Endothelial cell of umbilical vein (primary cell): ENCODE measurements at regions of chr16 and their contacts with region 1.

Region 1: DNA sequence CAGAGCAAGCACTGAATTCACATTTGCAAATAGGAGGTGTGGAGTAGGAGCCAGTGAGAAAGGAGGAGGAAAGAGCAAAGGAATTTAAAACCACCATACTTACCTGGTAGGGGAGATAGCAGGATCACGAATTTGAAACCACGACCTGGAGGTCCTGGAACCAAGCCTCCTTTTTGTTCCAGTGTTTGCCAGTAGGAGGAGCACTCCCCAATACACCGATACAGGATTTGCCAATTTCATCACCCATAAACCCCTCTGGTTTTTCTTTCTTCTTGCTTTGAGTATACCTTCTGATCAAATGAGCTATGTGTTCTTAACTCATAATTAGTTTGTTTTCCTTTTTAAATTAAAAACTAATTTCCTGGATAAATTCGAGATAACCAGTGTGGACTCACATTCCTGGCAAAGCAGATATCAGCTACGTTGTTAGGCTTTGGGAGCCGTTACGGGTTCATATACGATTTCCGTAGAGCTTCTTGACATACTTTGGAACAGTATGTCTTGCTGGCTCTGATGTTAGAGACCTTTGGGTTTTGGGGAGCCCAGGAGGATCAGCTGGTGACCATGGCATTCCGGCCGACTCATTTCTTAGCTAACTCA is 22.7 kb downstream of the BCO1 start:
- DNase-seq: peak; percentile 30
- H3K4me3 ChIP-seq: no peak overlapping the region
- H3K27ac ChIP-seq: no peak overlapping the region
- H3K4me1 ChIP-seq: no peaks in the 10 kb centered on the region
- H3K27me3 ChIP-seq: peaks cover 0 to 1% of the 10 kb centered on the region in 2 experiments
- CTCF ChIP-seq: peak; percentile 71 to 72
- POLR2A ChIP-seq: no peak

Region 2: DNA sequence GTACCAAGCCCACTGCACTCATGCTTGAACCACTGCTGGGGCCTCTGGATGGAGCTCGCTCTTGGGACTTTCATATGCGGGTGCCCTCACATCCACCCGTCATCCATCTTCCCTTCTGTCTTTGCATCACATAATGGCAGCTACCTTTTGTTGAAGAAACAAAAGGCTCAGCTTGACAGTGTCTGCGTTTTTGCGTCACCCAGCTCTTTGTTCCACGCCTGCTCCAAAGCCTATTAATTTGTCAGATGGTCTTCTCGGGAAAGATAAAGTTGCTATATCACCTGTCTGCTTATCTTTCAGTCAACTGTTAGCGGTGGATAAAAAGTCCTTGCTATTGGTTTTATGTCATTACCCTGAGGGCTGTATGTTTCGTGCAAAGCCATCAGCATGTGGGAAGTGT is 40.8 kb before region 1 on chr16:
- CTCF ChIA-PET with region 1: no interaction called
- POLR2A ChIA-PET with region 1: no interaction called
- dilution Hi-C with region 1: no loop called
- intact Hi-C with region 1: no loop called
- DNase-seq: no peak
- H3K4me3 ChIP-seq: no peak overlapping the region
- H3K27ac ChIP-seq: no peak overlapping the region
- H3K4me1 ChIP-seq: no peaks in the 10 kb centered on the region
- H3K27me3 ChIP-seq: peaks cover 0 to 3% of the 10 kb centered on the region in 2 experiments
- CTCF ChIP-seq: no peak
- POLR2A ChIP-seq: no peak

Region 3: GRCh38 chr16:81238296-81239011 is 22.7 kb before region 1 on chr16 and contains the start of gene BCO1:
- CTCF ChIA-PET with region 1: interaction called, 13 read pairs
- POLR2A ChIA-PET with region 1: no interaction called
- dilution Hi-C with region 1: no loop called
- intact Hi-C with region 1: no loop called
- DNase-seq: peak; percentile 43
- H3K4me3 ChIP-seq: peak within 1 kb of the TSS in 2 of 3 experiments; percentile 5 to 33
- H3K27ac ChIP-seq: no peak within 1 kb of the TSS
- H3K4me1 ChIP-seq: no peaks in the 10 kb centered on the region
- H3K27me3 ChIP-seq: no peaks in the 10 kb centered on the region
- CTCF ChIP-seq: no peak
- POLR2A ChIP-seq: no peak
- total RNA-seq, gene BCO1: not detected in 2 replicates

Region 4: GRCh38 chr16:81279395-81279794 is 18.2 kb after region 1 on chr16:
- CTCF ChIA-PET with region 1: interaction called, 12 read pairs
- POLR2A ChIA-PET with region 1: interaction called, 4 read pairs
- dilution Hi-C with region 1: no loop called
- intact Hi-C with region 1: no loop called
- DNase-seq: peak; percentile 76
- H3K4me3 ChIP-seq: no peak overlapping the region
- H3K27ac ChIP-seq: peak overlapping the region; percentile 91
- H3K4me1 ChIP-seq: peaks cover 21% of the 10 kb centered on the region
- H3K27me3 ChIP-seq: no peaks in the 10 kb centered on the region
- CTCF ChIP-seq: no peak
- POLR2A ChIP-seq: no peak

Region 5: GRCh38 chr16:81286190-81286589 is 25.0 kb after region 1 on chr16:
- CTCF ChIA-PET with region 1: interaction called, 12 read pairs
- POLR2A ChIA-PET with region 1: no interaction called
- dilution Hi-C with region 1: no loop called
- intact Hi-C with region 1: no loop called
- DNase-seq: no peak
- H3K4me3 ChIP-seq: no peak overlapping the region
- H3K27ac ChIP-seq: no peak overlapping the region
- H3K4me1 ChIP-seq: no peaks in the 10 kb centered on the region
- H3K27me3 ChIP-seq: no peaks in the 10 kb centered on the region
- CTCF ChIP-seq: no peak
- POLR2A ChIP-seq: no peak

Region 6: GRCh38 chr16:81314603-81315270 is 53.6 kb after region 1 on chr16 and contains the start of gene GAN:
- CTCF ChIA-PET with region 1: interaction called, 20 read pairs
- POLR2A ChIA-PET with region 1: no interaction called
- dilution Hi-C with region 1: no loop called
- intact Hi-C with region 1: loop called (anchors 1 kb)
- DNase-seq: peak; percentile 98
- H3K4me3 ChIP-seq: peak within 1 kb of the TSS; percentile 59 to 94 (median 93)
- H3K27ac ChIP-seq: peak within 1 kb of the TSS; percentile 67
- H3K4me1 ChIP-seq: peaks cover 16% of the 10 kb centered on the region
- H3K27me3 ChIP-seq: no peaks in the 10 kb centered on the region
- CTCF ChIP-seq: no peak
- POLR2A ChIP-seq: peak; percentile 76
- total RNA-seq, gene GAN: 11.1 and 12.2 TPM in 2 replicates

Region 7: GRCh38 chr16:81723098-81723723 is 462.1 kb after region 1 on chr16:
- CTCF ChIA-PET with region 1: interaction called, 3 read pairs
- POLR2A ChIA-PET with region 1: no interaction called
- dilution Hi-C with region 1: no loop called
- intact Hi-C with region 1: loop called (anchors 1 kb)
- DNase-seq: peak; percentile 85
- H3K4me3 ChIP-seq: no peak overlapping the region
- H3K27ac ChIP-seq: no peak overlapping the region
- H3K4me1 ChIP-seq: peaks cover 7% of the 10 kb centered on the region
- H3K27me3 ChIP-seq: peaks cover 0 to 3% of the 10 kb centered on the region in 2 experiments
- CTCF ChIP-seq: peak; percentile 47 to 53
- POLR2A ChIP-seq: no peak

Region 8: GRCh38 chr16:81737885-81738786 is 477.0 kb after region 1 on chr16:
- CTCF ChIA-PET with region 1: interaction called, 10 read pairs
- POLR2A ChIA-PET with region 1: no interaction called
- dilution Hi-C with region 1: no loop called
- intact Hi-C with region 1: loop called (anchors 1 kb)
- DNase-seq: peak; percentile 81
- H3K4me3 ChIP-seq: peak overlapping the region in 1 of 3 experiments; percentile 40
- H3K27ac ChIP-seq: no peak overlapping the region
- H3K4me1 ChIP-seq: peaks cover 4% of the 10 kb centered on the region
- H3K27me3 ChIP-seq: no peaks in the 10 kb centered on the region
- CTCF ChIP-seq: peak; percentile 77 to 83
- POLR2A ChIP-seq: no peak